Posterior cingulate gyrus (tissue), 11 donors: ENCODE measurements at regions of chr12 and their contacts with region 1.

Region 1: GRCh38 chr12:118714051-118714460 is 267.3 kb upstream of the SRRM4 start:
- DNase-seq: peak in 4 of 10 donors; percentile 26 to 67 (median 52)

Region 2: DNA sequence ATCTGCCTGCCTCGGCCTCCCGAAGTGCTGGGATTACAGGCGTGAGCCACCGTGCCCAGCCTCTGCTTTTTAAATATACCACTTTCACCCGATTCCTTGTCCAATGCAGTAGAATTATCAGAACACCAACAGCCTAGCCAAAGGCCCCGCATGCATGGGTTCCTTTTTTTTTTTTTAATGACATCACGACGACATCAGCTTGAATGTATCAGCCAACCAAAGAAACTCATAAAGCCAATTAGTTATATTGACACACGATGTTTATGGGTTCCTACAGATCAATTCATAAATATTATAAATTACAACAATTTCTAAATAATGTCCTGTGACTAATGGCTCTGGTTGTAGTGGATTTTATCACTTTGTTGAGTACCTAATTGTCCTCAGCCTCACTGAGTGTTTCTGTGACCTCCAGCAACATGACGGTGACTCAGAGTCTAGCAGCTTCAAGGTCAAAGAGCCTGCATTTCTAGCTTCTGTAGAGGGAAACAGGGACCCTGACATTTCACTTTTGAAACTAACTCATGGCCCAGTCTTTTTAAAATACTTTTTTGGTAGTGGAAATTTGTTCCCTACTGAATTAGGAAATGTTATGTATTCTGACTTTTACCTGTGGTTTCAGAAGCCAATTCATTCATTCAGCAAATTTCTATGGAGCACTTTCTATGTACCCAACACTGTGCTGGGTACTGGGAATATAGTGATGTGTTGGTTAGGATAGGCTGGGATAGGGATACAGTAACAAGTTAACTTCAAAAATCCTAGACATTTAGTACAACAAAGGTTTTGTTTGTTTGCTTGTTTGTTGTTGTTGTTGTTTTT is 193.6 kb before region 1 on chr12:
- intact Hi-C with region 1: no loop called
- DNase-seq: no peak

Region 3: DNA sequence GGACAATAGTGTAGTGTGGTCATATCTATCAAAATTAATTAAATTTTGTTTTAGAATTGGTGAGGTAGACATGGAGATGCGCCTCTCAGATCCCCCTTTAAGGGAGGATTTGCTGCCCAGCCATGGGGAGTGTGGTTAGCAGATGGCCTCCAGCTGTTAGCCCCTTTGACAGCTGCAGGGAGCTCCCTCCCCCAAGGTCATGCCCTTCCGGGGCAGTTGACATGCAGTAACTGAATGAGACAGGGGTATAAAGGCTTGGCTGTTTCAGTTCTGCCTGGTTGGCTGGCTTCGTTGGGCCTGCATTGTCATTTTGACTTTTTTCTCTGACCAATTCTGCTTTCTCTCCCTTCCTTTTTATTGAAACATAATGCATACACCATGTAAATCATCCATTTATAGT is 24.3 kb before region 1 on chr12:
- intact Hi-C with region 1: no loop called
- DNase-seq: no peak

Region 4: GRCh38 chr12:118743896-118744700 is 30.0 kb after region 1 on chr12:
- intact Hi-C with region 1: no loop called
- DNase-seq: no peak

Region 5: DNA sequence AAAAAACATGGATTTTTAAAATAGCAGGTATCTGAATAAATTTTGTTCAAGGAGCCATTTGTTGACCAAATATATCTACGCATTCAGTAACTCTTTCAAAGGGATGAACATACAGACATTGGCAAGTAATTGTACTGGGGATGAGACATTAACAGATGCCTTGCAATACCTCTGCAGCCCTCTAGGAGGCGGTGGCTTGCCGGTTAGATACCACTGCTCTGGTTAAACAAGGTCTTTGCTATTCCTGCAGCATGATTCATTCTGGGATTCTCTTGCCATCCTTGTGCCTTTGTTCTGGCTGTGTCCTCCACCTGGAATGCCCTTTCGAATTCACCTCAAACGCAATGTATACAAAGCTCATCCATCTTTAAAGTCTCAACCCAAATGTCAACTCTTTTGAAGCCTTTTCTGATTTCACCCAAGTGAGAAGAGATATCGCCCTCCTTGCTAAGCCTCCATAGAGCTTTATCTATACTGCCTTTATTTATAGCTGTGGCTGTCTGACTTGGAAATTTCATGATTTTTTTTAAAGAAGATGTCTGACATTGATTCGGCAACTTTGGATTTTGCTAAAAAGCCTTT is 136.3 kb after region 1 on chr12:
- intact Hi-C with region 1: loop called (anchors 5 kb)
- DNase-seq: no peak